Activated CD8-positive, alpha-beta T cell treated with anti-CD3 and anti-CD28 coated beads for 36 hours (primary cell): ENCODE measurements at regions of chr4 and their contacts with region 1.

Region 1: GRCh38 chr4:120991930-120992329 is 69.4 kb upstream of the PRDM5 start:
- DNase-seq: no peak
- ATAC-seq: no peak
- H3K4me3 Mint-ChIP-seq: no peak overlapping the region
- H3K27ac Mint-ChIP-seq: no peak overlapping the region
- H3K4me1 Mint-ChIP-seq: peaks cover 22% of the 10 kb centered on the region
- H3K27me3 Mint-ChIP-seq: no peaks in the 10 kb centered on the region
- CTCF ChIP-seq: no peak

Region 2: GRCh38 chr4:120977435-120977997 is 14.4 kb before region 1 on chr4:
- CTCF ChIA-PET with region 1: interaction called, 13 read pairs
- POLR2A ChIA-PET with region 1: no interaction called
- intact Hi-C with region 1: no loop called
- DNase-seq: peak; percentile 26
- ATAC-seq: peak; percentile 67
- H3K4me3 Mint-ChIP-seq: no peak overlapping the region
- H3K27ac Mint-ChIP-seq: no peak overlapping the region
- H3K4me1 Mint-ChIP-seq: peaks cover 2% of the 10 kb centered on the region
- H3K27me3 Mint-ChIP-seq: no peaks in the 10 kb centered on the region
- CTCF ChIP-seq: peak; percentile 59

Region 3: GRCh38 chr4:121009578-121010478 is 17.9 kb after region 1 on chr4:
- CTCF ChIA-PET with region 1: no interaction called
- POLR2A ChIA-PET with region 1: no interaction called
- intact Hi-C with region 1: no loop called
- DNase-seq: no peak
- ATAC-seq: no peak
- H3K4me3 Mint-ChIP-seq: no peak overlapping the region
- H3K27ac Mint-ChIP-seq: peak overlapping the region; percentile 45
- H3K4me1 Mint-ChIP-seq: peaks cover 65% of the 10 kb centered on the region
- H3K27me3 Mint-ChIP-seq: no peaks in the 10 kb centered on the region
- CTCF ChIP-seq: no peak